ENCODE measurements at regions of chr13 and their contacts with region 1.

Region 1: DNA sequence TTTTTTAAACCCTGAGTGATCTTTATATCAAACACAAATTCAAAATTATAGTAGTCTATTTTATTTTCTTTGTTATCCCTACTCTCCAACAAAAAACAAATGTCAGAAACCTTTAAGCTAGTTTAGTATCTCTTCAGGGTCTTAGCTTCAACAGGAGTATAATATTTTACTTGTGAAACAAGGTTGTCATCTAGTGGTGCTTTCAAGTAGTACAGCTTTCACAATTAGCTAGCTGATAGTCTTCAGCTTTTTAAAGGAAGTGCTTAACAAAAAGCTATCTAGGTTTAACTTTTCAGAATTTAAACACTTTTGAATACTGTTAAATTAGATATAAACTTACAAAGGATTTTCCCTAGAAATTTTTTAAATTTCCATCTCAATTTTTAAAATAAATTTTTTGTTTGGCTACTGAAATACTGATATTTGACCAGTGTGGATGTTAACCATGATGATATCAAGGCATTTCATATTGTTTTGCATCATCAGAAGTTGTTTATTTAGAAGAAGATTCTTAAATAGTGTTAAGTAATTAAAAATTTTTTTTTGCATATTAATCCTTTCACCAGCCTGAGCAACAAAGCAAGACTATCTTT is 34.2 kb downstream of the TDRD3 start:
- DNase-seq: peak; percentile 80
- H3K4me3 ChIP-seq: no peak overlapping the region
- H3K27ac ChIP-seq: no peak overlapping the region
- H3K4me1 ChIP-seq: peaks cover 6% of the 10 kb centered on the region
- H3K27me3 ChIP-seq: no peaks in the 10 kb centered on the region
- CTCF ChIP-seq: peak; percentile 44 to 63
- POLR2A ChIP-seq: no peak

Region 2: GRCh38 chr13:59771272-59771671 is 659.9 kb before region 1 on chr13:
- CTCF ChIA-PET with region 1: interaction called, 9 read pairs
- POLR2A ChIA-PET with region 1: no interaction called
- dilution Hi-C with region 1: no loop called
- intact Hi-C with region 1: loop called (anchors 10 kb)
- DNase-seq: peak; percentile 25
- H3K4me3 ChIP-seq: no peak overlapping the region
- H3K27ac ChIP-seq: no peak overlapping the region
- H3K4me1 ChIP-seq: no peaks in the 10 kb centered on the region
- H3K27me3 ChIP-seq: no peaks in the 10 kb centered on the region
- CTCF ChIP-seq: peak; percentile 39 to 46
- POLR2A ChIP-seq: no peak

Region 3: GRCh38 chr13:59979589-59979988 is 451.6 kb before region 1 on chr13:
- CTCF ChIA-PET with region 1: no interaction called
- POLR2A ChIA-PET with region 1: no interaction called
- dilution Hi-C with region 1: no loop called
- intact Hi-C with region 1: loop called (anchors 5 kb)
- DNase-seq: no peak
- H3K4me3 ChIP-seq: no peak overlapping the region
- H3K27ac ChIP-seq: no peak overlapping the region
- H3K4me1 ChIP-seq: no peaks in the 10 kb centered on the region
- H3K27me3 ChIP-seq: no peaks in the 10 kb centered on the region
- CTCF ChIP-seq: no peak
- POLR2A ChIP-seq: no peak

Region 4: DNA sequence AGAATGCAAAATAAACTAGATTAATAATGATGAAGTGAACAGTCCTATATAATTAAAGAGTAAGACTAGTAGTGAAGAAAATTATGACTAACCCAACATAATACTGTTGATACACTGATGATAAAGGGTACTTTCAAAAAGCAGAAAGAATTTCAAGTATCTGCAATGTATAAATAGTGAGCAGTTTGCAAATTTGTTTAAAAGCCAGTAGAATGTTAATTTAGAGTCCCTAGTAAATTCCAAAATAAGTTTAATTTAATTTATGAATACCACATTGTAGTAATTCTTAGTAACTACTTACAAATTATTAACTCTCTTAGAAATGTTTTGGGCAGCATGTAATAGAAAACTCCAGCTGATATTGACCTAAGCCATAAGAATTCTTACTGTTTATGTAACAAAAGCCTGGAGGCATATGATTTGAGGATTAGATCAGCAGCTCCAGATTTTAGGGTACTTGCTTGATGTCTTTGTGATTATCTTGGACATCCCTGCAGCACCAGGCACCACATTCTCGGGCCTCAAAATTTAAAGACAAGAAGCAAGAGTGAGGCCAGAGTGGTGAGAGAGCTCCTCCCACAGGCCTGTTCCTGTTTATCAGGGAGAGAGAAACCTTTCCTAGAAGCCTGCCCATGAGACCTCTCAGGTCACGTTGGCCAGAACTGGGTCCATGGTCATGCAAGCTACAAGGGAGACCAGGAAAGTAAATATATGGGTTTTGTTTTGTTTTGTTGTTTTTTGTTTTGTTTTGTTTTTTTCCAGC is 101.8 kb before region 1 on chr13:
- CTCF ChIA-PET with region 1: interaction called, 12 read pairs
- POLR2A ChIA-PET with region 1: no interaction called
- dilution Hi-C with region 1: no loop called
- intact Hi-C with region 1: loop called (anchors 2 kb)
- DNase-seq: peak; percentile 2
- H3K4me3 ChIP-seq: no peak overlapping the region
- H3K27ac ChIP-seq: no peak overlapping the region
- H3K4me1 ChIP-seq: peaks cover 7% of the 10 kb centered on the region
- H3K27me3 ChIP-seq: peaks cover 0 to 1% of the 10 kb centered on the region in 2 experiments
- CTCF ChIP-seq: peak in 1 of 2 donors; percentile 21
- POLR2A ChIP-seq: no peak

Region 5: GRCh38 chr13:60396783-60397703 is 34.2 kb before region 1 on chr13 and contains the start of gene TDRD3:
- CTCF ChIA-PET with region 1: interaction called, 17 read pairs
- POLR2A ChIA-PET with region 1: no interaction called
- dilution Hi-C with region 1: no loop called
- intact Hi-C with region 1: loop called (anchors 1 kb)
- DNase-seq: peak; percentile 90
- H3K4me3 ChIP-seq: peak within 1 kb of the TSS; percentile 76 to 97 (median 94)
- H3K27ac ChIP-seq: peak within 1 kb of the TSS; percentile 93
- H3K4me1 ChIP-seq: peaks cover 23% of the 10 kb centered on the region
- H3K27me3 ChIP-seq: no peaks in the 10 kb centered on the region
- CTCF ChIP-seq: peak; percentile 86 to 94
- POLR2A ChIP-seq: peak; percentile 70
- total RNA-seq, gene TDRD3: 16.3 and 18.5 TPM in 2 replicates

Region 6: GRCh38 chr13:60494296-60494695 is 63.1 kb after region 1 on chr13:
- CTCF ChIA-PET with region 1: no interaction called
- POLR2A ChIA-PET with region 1: no interaction called
- dilution Hi-C with region 1: no loop called
- intact Hi-C with region 1: no loop called
- DNase-seq: no peak
- H3K4me3 ChIP-seq: no peak overlapping the region
- H3K27ac ChIP-seq: no peak overlapping the region
- H3K4me1 ChIP-seq: no peaks in the 10 kb centered on the region
- H3K27me3 ChIP-seq: no peaks in the 10 kb centered on the region
- CTCF ChIP-seq: no peak
- POLR2A ChIP-seq: no peak